ENCODE measurements at regions of chr3 and their contacts with region 1.

Region 1: DNA sequence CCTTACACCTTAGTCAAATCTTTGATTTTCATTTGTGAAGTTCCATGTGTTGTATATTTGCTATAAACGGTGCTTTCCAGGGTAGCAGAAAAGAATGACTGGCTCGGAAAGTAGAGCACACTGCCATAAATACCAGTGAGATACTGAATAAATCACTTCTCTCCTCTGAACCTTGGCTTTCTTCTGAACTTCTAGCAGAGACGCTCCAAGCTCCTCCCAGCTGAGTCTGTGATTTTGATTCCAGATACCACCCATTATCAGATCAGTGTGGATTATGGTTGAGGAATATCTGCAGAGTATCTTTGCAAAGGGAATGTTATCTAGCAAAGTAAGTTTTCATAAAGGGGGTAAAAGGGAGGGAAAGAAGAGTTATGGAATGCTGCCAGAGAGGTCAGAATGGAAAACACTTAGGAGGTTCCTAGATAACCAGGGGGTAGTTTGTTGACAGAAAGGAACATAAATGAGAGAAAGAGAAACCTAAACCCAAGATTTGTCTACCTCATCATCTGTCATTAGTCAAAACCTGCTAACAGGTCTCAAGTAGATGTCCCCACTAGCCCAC is 98.5 kb upstream of the PSMD6 start:
- DNase-seq: no peak
- H3K4me3 ChIP-seq: no peak overlapping the region
- H3K27ac ChIP-seq: peak overlapping the region in 2 of 4 donors; percentile 14 to 35
- H3K4me1 ChIP-seq: peaks cover 0 to 5% (median 0%) of the 10 kb centered on the region in 4 donors
- H3K27me3 ChIP-seq: no peaks in the 10 kb centered on the region
- CTCF ChIP-seq: no peak
- EP300 ChIP-seq: no peak
- POLR2A ChIP-seq: no peak

Region 2: GRCh38 chr3:63891518-63891917 is 230.3 kb before region 1 on chr3:
- in situ Hi-C with region 1: no loop called
- intact Hi-C with region 1: loop called (anchors 5 kb)
- DNase-seq: no peak
- H3K4me3 ChIP-seq: no peak overlapping the region
- H3K27ac ChIP-seq: no peak overlapping the region
- H3K4me1 ChIP-seq: peaks cover 0 to 21% (median 2%) of the 10 kb centered on the region in 4 donors
- H3K27me3 ChIP-seq: no peaks in the 10 kb centered on the region
- CTCF ChIP-seq: no peak
- EP300 ChIP-seq: no peak
- POLR2A ChIP-seq: no peak

Measured in transverse colon (tissue), 4 donors.